RWPE1 (cell line): ENCODE measurements at regions of chr15 and their contacts with region 1.

Region 1: DNA sequence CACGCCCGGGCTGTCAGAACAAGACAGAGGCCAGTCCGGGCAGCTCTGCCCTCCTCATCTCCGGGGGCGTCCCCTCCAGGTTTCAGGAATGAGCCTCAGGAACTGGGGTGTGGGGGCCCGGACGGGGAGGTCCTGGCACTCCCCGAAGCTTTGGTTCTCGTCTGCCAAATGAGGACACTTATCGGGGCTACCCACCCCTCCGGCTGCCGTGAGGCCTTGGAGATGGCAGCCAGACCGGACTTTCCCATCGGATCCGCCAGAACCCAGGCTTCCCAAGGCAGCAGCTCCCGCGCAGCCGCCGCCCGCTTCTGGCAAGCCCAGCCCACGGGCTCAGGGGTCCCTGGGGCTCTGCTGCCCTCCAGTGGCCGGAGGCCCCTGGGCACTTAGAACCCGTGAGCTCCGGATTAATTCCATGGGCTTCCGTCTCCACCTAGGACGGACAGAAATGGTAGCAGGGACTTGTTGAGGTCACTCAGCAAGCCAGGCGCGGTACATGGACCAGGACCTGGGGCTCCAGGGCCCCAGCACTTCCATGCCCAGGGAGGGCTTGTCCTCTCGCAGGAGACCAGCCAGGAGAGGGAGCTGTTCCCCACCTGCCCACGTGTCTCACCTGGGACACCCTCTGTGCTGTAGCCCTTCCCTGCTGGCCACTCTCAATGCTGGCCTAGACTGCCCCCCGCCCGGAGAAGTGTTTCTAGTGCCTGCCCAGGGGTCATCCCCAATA is 89.4 kb downstream of the LINGO1 start:
- DNase-seq: peak; percentile 90
- H3K27ac ChIP-seq: peak overlapping the region; percentile 76
- CTCF ChIP-seq: peak; percentile 98

Region 2: GRCh38 chr15:77107531-77108355 is 435.6 kb before region 1 on chr15:
- CTCF ChIA-PET with region 1: interaction called, 28 read pairs
- POLR2A ChIA-PET with region 1: no interaction called
- DNase-seq: peak; percentile 51
- H3K27ac ChIP-seq: no peak overlapping the region
- CTCF ChIP-seq: peak; percentile 80

Region 3: GRCh38 chr15:77112838-77113504 is 430.4 kb before region 1 on chr15:
- CTCF ChIA-PET with region 1: interaction called, 24 read pairs
- POLR2A ChIA-PET with region 1: no interaction called
- DNase-seq: no peak
- H3K27ac ChIP-seq: no peak overlapping the region
- CTCF ChIP-seq: no peak

Region 4: DNA sequence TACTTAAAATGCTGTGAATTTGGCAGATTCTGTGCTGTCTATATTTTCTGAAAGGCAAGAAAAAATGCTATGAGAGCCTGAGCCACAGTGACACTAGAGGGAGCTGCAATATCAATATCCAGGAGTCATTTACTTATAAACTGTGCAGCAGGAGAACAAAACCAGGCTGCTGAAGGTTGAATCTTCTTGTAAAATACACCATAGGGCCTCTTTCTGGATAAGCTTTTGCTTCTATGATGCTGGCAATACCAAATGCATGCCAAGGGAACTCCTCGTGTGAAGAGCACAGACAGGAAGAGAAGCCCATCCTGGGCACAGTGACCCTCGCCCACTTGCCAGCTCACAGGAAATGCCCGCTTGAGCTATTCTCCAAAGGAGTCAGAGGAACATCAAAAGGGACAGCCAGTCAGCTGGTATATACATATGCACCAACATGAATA is 424.4 kb before region 1 on chr15:
- CTCF ChIA-PET with region 1: interaction called, 24 read pairs
- POLR2A ChIA-PET with region 1: no interaction called
- DNase-seq: peak; percentile 61
- H3K27ac ChIP-seq: no peak overlapping the region
- CTCF ChIP-seq: peak; percentile 86

Region 5: DNA sequence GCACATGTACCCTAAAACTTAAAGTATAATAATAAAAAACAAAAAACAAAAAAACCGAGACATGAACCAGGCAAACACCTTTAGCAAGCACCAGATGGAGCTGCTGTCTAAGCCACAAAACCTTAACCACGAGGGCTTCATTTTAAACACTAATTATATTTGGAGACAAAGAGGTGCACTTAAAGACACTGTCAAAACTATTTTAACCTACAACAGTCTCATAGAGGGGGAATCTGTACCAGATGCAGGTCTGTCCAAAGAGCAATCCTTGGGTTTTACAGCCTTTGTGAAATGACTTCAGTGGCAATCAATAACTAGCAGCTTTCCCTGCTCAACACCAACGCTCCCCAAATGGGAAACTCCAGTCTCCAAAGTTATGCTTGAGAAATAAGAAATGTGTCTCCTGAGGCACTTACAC is 356.7 kb before region 1 on chr15:
- CTCF ChIA-PET with region 1: interaction called, 28 read pairs
- POLR2A ChIA-PET with region 1: no interaction called
- DNase-seq: peak; percentile 11
- H3K27ac ChIP-seq: no peak overlapping the region
- CTCF ChIP-seq: peak; percentile 36; the same call in 1 of the 2 replicates

Region 6: GRCh38 chr15:77419836-77420609 is 123.3 kb before region 1 on chr15 and contains the start of gene PEAK1:
- CTCF ChIA-PET with region 1: interaction called, 10 read pairs
- POLR2A ChIA-PET with region 1: no interaction called
- DNase-seq: peak; percentile 99
- H3K27ac ChIP-seq: peak within 1 kb of the TSS; percentile 91
- CTCF ChIP-seq: 0 out of 2 replicates have a peak, but pooled peaks have one; percentile 21

Region 7: GRCh38 chr15:77496710-77497103 is 46.6 kb before region 1 on chr15:
- CTCF ChIA-PET with region 1: interaction called, 14 read pairs
- POLR2A ChIA-PET with region 1: interaction called, 3 read pairs
- DNase-seq: peak; percentile 89
- H3K27ac ChIP-seq: peak overlapping the region; percentile 97
- CTCF ChIP-seq: peak; percentile 99

Region 8: GRCh38 chr15:77727635-77728304 is 184.4 kb after region 1 on chr15:
- CTCF ChIA-PET with region 1: no interaction called
- POLR2A ChIA-PET with region 1: no interaction called
- DNase-seq: no peak
- H3K27ac ChIP-seq: no peak overlapping the region
- CTCF ChIP-seq: no peak